Posterior cingulate gyrus (tissue), 11 donors: ENCODE measurements at regions of chr16 and their contacts with region 1.

Region 1: DNA sequence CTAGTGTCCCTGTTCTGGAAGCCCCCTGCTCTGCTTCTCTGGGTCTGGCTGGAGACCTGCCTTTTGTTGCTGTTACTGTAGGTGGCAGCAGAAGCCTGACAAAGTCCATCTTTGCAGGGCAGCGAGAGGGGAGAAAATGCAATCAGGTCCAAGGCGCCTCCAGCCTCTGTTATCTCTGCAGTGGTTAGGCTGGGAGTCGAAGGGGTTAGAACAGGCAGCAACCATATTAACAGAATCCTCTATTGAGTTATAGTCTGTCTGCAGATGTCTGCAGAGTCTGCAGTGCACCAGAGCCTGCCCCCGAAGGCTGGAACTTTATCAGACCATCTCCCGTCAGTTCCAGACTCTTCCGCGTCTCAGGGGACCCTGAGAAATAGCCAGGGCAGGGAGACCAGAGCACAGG is 404.9 kb upstream of the EEF2KMT start:
- DNase-seq: peak in 6 of 10 donors; percentile 20 to 91 (median 52)

Region 2: GRCh38 chr16:5604770-5605169 is 102.3 kb after region 1 on chr16:
- intact Hi-C with region 1: loop called (anchors 5 kb)
- DNase-seq: peak in 6 of 10 donors; percentile 22 to 90 (median 67)

Region 3: GRCh38 chr16:5615868-5616642 is 113.6 kb after region 1 on chr16:
- intact Hi-C with region 1: loop called (anchors 5 kb)
- DNase-seq: peak; percentile 49 to 96 (median 76)